PC-3 (cell line): ENCODE measurements at regions of chr3 and their contacts with region 1.

Region 1: DNA sequence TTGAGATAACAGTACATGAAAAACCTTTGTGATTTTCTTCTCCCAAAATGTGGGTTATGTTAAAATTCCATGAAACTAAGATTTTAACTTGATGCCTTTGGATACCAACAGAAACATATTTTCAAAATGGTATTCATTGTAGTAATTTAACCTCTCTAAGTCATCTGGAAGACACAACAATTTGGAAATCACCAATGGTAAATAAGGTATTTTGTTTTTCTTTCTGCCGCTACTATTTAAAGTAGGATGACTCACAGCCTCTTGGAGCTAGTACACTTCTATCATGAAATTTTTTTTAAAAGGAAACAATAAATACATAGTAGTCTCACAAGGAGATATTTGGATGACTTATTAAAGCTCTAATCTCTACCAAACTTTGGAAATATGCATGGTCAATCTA is 291.6 kb upstream of the VEPH1 start:
- DNase-seq: peak; percentile 77
- ATAC-seq: peak; percentile 96
- H3K4me3 ChIP-seq: no peak overlapping the region
- H3K27ac ChIP-seq: peak overlapping the region; percentile 22; the same call in 1 of the 2 replicates
- H3K4me1 ChIP-seq: peaks cover 21% of the 10 kb centered on the region
- H3K27me3 ChIP-seq: no peaks in the 10 kb centered on the region
- CTCF ChIP-seq: no peak

Region 2: GRCh38 chr3:157713101-157713500 is 81.7 kb before region 1 on chr3:
- CTCF ChIA-PET with region 1: no interaction called
- POLR2A ChIA-PET with region 1: no interaction called
- intact Hi-C with region 1: loop called (anchors 2 kb)
- DNase-seq: peak; percentile 59
- ATAC-seq: peak; percentile 97
- H3K4me3 ChIP-seq: no peak overlapping the region
- H3K27ac ChIP-seq: no peak overlapping the region
- H3K4me1 ChIP-seq: peaks cover 10% of the 10 kb centered on the region
- H3K27me3 ChIP-seq: no peaks in the 10 kb centered on the region
- CTCF ChIP-seq: no peak

Region 3: GRCh38 chr3:157856078-157856939 is 61.5 kb after region 1 on chr3:
- CTCF ChIA-PET with region 1: no interaction called
- POLR2A ChIA-PET with region 1: no interaction called
- intact Hi-C with region 1: loop called (anchors 2 kb)
- DNase-seq: peak; percentile 84
- ATAC-seq: peak; percentile 88
- H3K4me3 ChIP-seq: no peak overlapping the region
- H3K27ac ChIP-seq: no peak overlapping the region
- H3K4me1 ChIP-seq: peaks cover 19% of the 10 kb centered on the region
- H3K27me3 ChIP-seq: no peaks in the 10 kb centered on the region
- CTCF ChIP-seq: no peak; the same call in 1 of the 2 replicates